Caco-2 (cell line): ENCODE measurements at regions of chr6 and their contacts with region 1.

Region 1: DNA sequence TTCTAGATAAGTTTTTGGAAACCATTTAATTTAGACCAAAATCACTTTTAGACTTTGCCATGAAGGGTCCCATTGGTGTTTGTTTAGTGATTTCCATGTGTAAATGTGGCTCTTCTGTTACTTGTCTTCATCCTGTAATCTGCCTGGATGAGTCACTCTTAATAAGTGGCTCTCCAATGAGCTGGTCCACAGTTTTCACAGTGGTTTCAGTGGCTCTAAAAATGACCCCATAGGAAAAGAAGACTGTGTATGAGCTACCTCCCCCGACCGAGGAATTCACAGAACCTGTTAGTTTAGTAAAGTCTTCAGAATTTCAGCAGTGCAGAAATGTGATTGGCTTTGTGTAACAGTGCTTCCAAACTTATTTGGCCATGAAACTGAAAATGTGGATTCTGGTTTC is 492.0 kb upstream of the MARCKS start:
- DNase-seq: peak in 1 of 2 experiments; percentile 20
- H3K4me3 ChIP-seq: no peak overlapping the region
- H3K4me3 Mint-ChIP-seq: no peak overlapping the region
- H3K27ac Mint-ChIP-seq: no peak overlapping the region
- H3K4me1 ChIP-seq: peaks cover 20% of the 10 kb centered on the region
- H3K4me1 Mint-ChIP-seq: peaks cover 9% of the 10 kb centered on the region
- H3K27me3 ChIP-seq: no peaks in the 10 kb centered on the region
- H3K27me3 Mint-ChIP-seq: no peaks in the 10 kb centered on the region
- CTCF ChIP-seq: no peak

Region 2: GRCh38 chr6:113414511-113414910 is 49.3 kb after region 1 on chr6:
- CTCF ChIA-PET with region 1: no interaction called
- POLR2A ChIA-PET with region 1: interaction called, 14 read pairs
- intact Hi-C with region 1: no loop called
- DNase-seq: peak; percentile 39 to 45
- H3K4me3 ChIP-seq: no peak overlapping the region
- H3K4me3 Mint-ChIP-seq: no peak overlapping the region
- H3K27ac Mint-ChIP-seq: no peak overlapping the region
- H3K4me1 ChIP-seq: peaks cover 8% of the 10 kb centered on the region; the same call in 1 of the 2 replicates
- H3K4me1 Mint-ChIP-seq: peaks cover 13% of the 10 kb centered on the region
- H3K27me3 ChIP-seq: no peaks in the 10 kb centered on the region
- H3K27me3 Mint-ChIP-seq: no peaks in the 10 kb centered on the region
- CTCF ChIP-seq: peak in 1 of 2 experiments; percentile 50